ENCODE measurements at regions of chr12 and their contacts with region 1.

Region 1: DNA sequence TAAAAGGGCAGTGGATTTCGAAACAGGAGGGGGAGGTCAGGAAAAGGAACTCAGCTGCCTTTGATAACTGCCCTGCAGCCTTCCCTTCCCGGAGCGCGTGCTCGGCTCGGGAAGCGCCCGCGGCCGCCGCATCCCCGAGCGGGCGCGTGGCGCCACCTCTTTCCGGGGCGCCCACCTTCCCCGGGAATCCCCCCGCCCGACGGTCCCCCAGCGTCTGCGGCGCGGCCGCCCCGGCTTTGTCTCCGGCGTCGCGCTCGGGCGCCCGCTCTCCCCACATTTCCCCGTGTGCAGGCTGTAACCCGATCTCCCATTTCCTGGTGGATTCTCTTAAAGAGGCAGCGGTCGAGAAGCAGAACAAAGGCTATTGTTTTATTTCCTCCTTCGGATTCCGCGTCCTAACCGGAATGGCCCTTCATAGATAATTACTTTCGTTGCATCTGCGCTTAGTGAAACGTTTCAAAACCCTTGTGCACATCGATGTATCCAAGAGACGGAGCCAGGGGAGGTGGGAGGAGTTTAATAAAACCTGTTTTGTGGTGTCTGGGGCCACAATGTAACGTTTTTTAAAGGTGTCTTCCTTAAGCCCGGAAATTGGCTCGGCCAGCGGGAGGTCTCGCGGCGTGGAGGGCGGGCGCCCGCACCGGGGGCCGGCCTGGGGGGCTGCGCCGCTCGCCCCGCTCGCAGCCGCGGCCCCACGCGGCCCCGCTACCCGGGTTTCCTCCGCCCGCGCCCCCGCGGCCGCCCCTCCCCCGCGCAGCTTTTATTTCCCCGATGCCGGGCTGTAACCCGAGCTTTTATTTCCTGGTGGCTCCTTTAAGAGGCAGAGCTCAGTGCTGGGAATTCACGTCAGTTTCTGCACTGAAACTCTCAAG is at the start of gene ETV6:
- DNase-seq: peak; percentile 73
- H3K4me3 Mint-ChIP-seq: peak within 1 kb of the TSS; percentile 94
- H3K27ac Mint-ChIP-seq: peak within 1 kb of the TSS; percentile 99
- H3K4me1 Mint-ChIP-seq: peaks cover 28% of the 10 kb centered on the region
- H3K27me3 Mint-ChIP-seq: peaks cover 2% of the 10 kb centered on the region
- total RNA-seq, gene ETV6: 68.2 and 69.4 TPM in 2 replicates

Region 2: GRCh38 chr12:11508699-11509098 is 140.4 kb before region 1 on chr12:
- intact Hi-C with region 1: no loop called
- DNase-seq: no peak
- H3K4me3 Mint-ChIP-seq: no peak overlapping the region
- H3K27ac Mint-ChIP-seq: no peak overlapping the region
- H3K4me1 Mint-ChIP-seq: no peaks in the 10 kb centered on the region
- H3K27me3 Mint-ChIP-seq: peaks cover 4% of the 10 kb centered on the region

Region 3: DNA sequence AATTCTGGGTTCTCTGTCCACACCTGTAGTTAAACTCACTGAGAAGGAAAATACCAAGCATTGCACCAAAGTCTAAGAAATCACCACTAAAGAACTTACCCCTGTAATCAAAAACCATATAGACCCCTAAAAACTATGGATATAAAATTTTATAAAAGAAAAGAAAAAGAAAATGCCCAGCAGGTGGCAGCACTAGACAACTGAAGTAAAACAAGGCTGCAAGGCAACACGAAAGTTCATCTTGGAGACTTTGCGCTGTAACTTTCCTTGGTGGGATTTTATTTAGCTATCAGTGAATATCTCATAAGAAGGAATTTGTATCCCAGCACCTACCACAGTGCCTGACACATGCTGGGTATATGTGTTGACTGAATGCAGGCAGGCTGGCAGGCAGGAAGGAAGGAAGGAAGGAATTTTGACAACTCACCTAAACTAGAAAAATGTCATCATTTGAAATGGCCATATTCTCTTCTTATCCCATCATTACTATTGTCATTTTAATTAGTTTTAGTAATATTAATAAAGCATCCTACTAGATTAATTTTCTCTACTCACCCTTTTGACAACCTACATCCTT is 67.8 kb before region 1 on chr12:
- intact Hi-C with region 1: loop called (anchors 2 kb)
- DNase-seq: peak; percentile 32
- H3K4me3 Mint-ChIP-seq: no peak overlapping the region
- H3K27ac Mint-ChIP-seq: no peak overlapping the region
- H3K4me1 Mint-ChIP-seq: peaks cover 14% of the 10 kb centered on the region
- H3K27me3 Mint-ChIP-seq: peaks cover 38% of the 10 kb centered on the region

Region 4: DNA sequence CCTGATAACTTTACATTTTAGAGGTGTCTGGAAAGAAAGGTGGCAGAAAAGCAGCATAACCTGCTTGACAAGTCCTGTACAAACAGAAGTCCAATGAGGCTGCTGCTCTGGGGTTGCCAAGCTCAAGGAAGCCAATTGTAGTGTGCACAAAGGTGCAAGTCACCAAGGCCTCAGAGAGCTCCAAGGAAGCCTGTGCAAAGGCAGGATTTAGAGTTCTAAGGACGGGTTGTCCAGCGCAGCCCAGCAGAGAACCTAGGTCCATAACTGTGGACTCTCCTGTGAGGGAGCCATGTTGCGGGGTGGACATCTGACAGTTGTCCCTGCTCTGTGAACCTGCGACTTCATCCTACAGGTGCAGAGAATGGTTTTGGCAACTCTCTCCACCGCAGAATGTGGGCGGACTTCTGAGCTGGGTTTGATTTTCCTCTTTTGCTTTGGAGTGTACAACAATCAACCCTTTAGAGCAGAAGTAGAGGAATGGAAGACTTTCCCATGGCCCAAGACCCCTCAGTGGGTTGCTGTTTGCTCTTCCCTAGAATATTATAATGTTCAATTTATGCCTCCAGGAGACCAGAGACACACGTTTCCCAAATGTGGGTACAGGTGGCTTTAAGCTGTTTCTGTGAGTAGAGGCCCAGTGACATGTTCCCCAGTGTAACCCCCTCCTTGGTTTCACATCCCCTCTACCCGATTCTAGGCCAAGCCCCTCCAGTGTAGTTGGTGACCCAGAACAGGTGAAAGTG is 81.4 kb after region 1 on chr12:
- intact Hi-C with region 1: loop called (anchors 1 kb)
- DNase-seq: no peak
- H3K4me3 Mint-ChIP-seq: peak overlapping the region; percentile 28
- H3K27ac Mint-ChIP-seq: peak overlapping the region; percentile 78
- H3K4me1 Mint-ChIP-seq: peaks cover 75% of the 10 kb centered on the region
- H3K27me3 Mint-ChIP-seq: no peaks in the 10 kb centered on the region

Region 5: DNA sequence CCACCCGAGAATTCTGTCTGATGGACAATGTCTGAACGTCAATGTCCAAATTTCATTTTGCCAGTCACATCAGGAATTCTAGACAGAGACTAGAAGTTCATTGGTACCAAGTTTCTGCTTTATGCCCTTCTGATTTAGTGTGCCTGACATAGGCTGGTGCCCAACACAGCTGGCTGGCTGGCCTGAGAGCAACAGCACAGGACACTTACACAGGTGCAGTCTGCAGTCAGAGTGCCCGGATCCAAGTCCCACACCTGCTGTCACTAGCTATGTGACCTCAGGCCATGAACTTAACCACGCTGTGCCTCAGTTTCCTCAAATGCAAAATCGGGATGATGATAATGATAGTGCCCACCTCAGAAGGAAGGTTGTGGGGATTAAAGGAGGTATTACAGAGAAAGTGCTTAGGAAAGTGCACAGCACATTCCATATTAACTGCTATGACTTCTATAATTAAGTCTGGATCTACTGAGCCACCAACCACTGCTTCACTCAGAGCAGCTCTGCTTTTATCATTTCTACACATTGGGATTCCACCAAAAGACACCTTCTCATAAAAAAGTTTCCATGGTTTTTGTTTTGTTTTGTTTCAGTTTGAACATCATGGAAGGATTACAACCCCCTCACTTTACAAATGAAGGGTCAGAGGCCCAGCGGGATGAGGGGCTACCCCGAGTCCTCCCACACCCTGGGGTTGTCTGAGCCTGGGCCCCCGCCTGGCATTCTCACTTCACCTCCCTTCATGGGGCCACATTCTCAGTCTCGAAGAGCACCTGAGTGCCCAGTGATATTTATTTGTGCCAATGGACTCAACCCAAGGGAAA is 252.8 kb after region 1 on chr12:
- intact Hi-C with region 1: loop called (anchors 1 kb)
- DNase-seq: no peak
- H3K4me3 Mint-ChIP-seq: no peak overlapping the region
- H3K27ac Mint-ChIP-seq: peak overlapping the region; percentile 85
- H3K4me1 Mint-ChIP-seq: peaks cover 59% of the 10 kb centered on the region
- H3K27me3 Mint-ChIP-seq: no peaks in the 10 kb centered on the region

Region 6: DNA sequence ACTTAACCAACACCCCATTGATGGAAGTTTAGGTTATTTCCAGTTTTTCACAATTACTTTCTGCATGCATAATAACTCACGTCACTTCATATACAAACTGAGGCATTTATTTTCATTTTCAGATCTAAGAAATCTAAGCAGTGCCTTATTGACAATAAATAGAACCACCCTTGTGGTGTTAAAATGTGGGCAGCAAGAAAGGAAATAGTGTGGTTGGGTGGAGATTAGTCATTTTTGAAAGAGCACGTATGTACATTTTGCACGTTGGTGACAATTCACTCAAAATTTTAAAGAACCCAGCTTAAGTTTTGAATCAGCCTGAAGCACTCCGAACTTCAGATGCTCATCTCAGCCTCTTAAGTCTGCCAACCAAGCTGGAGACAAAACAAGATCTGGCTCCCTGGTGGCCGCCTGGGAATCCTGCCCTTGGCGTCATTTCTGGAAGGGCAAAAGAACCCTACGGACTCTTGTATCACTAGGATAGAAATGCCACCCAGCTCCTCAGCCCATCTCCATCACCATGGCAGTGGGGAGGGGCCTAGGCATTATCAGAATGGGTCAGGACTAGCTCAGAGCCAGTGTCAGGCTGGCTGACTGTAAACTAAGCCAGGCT is 332.2 kb after region 1 on chr12:
- intact Hi-C with region 1: loop called (anchors 1 kb)
- DNase-seq: peak; percentile 60
- H3K4me3 Mint-ChIP-seq: peak overlapping the region; percentile 33
- H3K27ac Mint-ChIP-seq: peak overlapping the region; percentile 98
- H3K4me1 Mint-ChIP-seq: peaks cover 63% of the 10 kb centered on the region
- H3K27me3 Mint-ChIP-seq: no peaks in the 10 kb centered on the region

Region 7: DNA sequence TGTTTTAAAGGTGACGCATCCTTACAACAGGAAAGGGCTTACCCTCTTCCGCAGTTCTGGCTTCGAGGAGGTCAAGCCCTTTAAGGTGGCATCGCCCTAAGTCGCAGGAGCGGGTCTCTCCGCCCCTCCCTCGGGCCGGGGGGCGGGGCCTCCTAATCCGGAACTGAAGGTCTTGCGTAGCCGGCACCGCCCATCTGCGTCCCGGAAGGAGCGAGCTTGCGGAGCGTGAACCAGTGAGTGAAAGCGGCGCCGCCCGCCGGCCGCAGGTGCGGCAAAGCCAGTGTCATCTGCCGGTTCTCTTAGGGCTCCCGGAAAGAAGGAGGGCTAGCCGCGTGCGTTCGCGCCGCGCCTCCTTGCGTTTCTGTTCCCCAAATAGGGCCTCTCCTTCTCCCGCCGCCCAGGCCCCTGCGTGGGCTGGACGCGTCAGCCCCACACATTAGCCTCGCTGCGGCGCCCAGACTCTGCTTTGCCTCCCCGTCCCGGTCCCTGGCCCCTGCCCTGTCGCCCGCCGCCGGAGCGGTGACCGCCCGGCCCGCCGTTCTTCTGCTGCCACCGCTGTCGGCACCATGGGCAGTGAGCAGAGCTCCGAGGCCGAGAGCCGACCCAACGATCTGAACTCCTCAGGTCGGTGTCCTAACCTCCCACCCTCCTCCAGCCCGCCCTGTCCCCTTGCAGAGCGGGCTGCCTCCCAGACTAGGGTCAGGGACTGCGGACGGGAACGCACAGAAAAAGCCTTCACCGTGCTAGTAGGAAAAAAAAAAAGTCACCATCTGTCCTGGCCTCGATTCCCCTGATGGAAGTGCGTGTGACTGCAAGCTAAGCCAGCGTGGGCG is 708.0 kb after region 1 on chr12 and contains the start of gene BORCS5:
- intact Hi-C with region 1: loop called (anchors 2 kb)
- DNase-seq: peak; percentile 98
- H3K4me3 Mint-ChIP-seq: peak within 1 kb of the TSS; percentile 96
- H3K27ac Mint-ChIP-seq: peak within 1 kb of the TSS; percentile 99
- H3K4me1 Mint-ChIP-seq: peaks cover 41% of the 10 kb centered on the region
- H3K27me3 Mint-ChIP-seq: no peaks in the 10 kb centered on the region
- total RNA-seq, gene BORCS5: 41.8 and 45.9 TPM in 2 replicates